HEK293T (cell line): ENCODE measurements at regions of chr1 and their contacts with region 1.

Region 1: GRCh38 chr1:52404116-52404986 is at the starts of genes ORC1 and PRPF38A:
- DNase-seq: peak; percentile 97

Region 2: GRCh38 chr1:52216907-52217458 is 187.4 kb before region 1 on chr1:
- CTCF ChIA-PET with region 1: no interaction called
- POLR2A ChIA-PET with region 1: no interaction called
- DNase-seq: no peak

Region 3: GRCh38 chr1:52365746-52366516 is 38.4 kb before region 1 on chr1 and contains the start of gene CC2D1B:
- CTCF ChIA-PET with region 1: no interaction called
- POLR2A ChIA-PET with region 1: interaction called, 18 read pairs
- DNase-seq: peak; percentile 100

Region 4: GRCh38 chr1:52393174-52393573 is 11.2 kb before region 1 on chr1:
- CTCF ChIA-PET with region 1: no interaction called
- POLR2A ChIA-PET with region 1: interaction called, 18 read pairs
- DNase-seq: no peak

Region 5: GRCh38 chr1:52482326-52483004 is 78.1 kb after region 1 on chr1:
- CTCF ChIA-PET with region 1: no interaction called
- POLR2A ChIA-PET with region 1: no interaction called
- DNase-seq: no peak

Region 6: GRCh38 chr1:52511851-52512615 is 107.7 kb after region 1 on chr1:
- CTCF ChIA-PET with region 1: no interaction called
- POLR2A ChIA-PET with region 1: no interaction called
- DNase-seq: no peak

Region 7: GRCh38 chr1:52552505-52553361 is 148.4 kb after region 1 on chr1 and contains the start of gene TUT4:
- CTCF ChIA-PET with region 1: no interaction called
- POLR2A ChIA-PET with region 1: interaction called, 20 read pairs
- DNase-seq: peak; percentile 76

Region 8: DNA sequence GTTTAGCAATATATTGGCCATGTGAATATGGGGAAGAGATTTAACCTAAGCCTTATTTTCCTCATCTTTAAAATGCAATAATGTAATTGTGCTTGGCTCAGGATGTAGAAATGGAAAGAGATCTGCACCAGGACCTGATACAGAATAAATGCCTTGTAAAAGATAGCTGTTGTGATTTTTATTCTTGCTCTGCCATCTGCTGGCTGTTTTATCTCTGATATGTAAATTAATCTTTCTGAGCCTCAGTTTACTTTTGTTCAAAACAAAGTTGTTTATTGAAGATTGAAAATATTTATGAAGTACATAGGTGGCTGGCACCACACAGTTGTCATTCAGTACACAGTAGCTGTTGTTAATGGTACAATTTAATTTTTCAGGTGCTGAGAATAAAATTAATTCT is 343.8 kb after region 1 on chr1:
- CTCF ChIA-PET with region 1: no interaction called
- POLR2A ChIA-PET with region 1: no interaction called
- DNase-seq: no peak